Caco-2 (cell line): ENCODE measurements at regions of chr4 and their contacts with region 1.

Region 1: GRCh38 chr4:17786567-17786966 is 5.1 kb upstream of the FAM184B start:
- DNase-seq: no peak
- H3K4me3 ChIP-seq: no peak overlapping the region
- H3K4me3 Mint-ChIP-seq: no peak overlapping the region
- H3K27ac Mint-ChIP-seq: no peak overlapping the region
- H3K4me1 ChIP-seq: no peaks in the 10 kb centered on the region
- H3K4me1 Mint-ChIP-seq: no peaks in the 10 kb centered on the region
- H3K27me3 ChIP-seq: no peaks in the 10 kb centered on the region
- H3K27me3 Mint-ChIP-seq: no peaks in the 10 kb centered on the region
- CTCF ChIP-seq: no peak

Region 2: GRCh38 chr4:17562160-17562559 is 224.4 kb before region 1 on chr4:
- CTCF ChIA-PET with region 1: no interaction called
- POLR2A ChIA-PET with region 1: no interaction called
- intact Hi-C with region 1: no loop called
- DNase-seq: peak; percentile 12 to 46
- H3K4me3 ChIP-seq: no peak overlapping the region
- H3K4me3 Mint-ChIP-seq: no peak overlapping the region
- H3K27ac Mint-ChIP-seq: no peak overlapping the region
- H3K4me1 ChIP-seq: peaks cover 22% of the 10 kb centered on the region
- H3K4me1 Mint-ChIP-seq: peaks cover 6% of the 10 kb centered on the region
- H3K27me3 ChIP-seq: no peaks in the 10 kb centered on the region
- H3K27me3 Mint-ChIP-seq: no peaks in the 10 kb centered on the region
- CTCF ChIP-seq: no peak

Region 3: DNA sequence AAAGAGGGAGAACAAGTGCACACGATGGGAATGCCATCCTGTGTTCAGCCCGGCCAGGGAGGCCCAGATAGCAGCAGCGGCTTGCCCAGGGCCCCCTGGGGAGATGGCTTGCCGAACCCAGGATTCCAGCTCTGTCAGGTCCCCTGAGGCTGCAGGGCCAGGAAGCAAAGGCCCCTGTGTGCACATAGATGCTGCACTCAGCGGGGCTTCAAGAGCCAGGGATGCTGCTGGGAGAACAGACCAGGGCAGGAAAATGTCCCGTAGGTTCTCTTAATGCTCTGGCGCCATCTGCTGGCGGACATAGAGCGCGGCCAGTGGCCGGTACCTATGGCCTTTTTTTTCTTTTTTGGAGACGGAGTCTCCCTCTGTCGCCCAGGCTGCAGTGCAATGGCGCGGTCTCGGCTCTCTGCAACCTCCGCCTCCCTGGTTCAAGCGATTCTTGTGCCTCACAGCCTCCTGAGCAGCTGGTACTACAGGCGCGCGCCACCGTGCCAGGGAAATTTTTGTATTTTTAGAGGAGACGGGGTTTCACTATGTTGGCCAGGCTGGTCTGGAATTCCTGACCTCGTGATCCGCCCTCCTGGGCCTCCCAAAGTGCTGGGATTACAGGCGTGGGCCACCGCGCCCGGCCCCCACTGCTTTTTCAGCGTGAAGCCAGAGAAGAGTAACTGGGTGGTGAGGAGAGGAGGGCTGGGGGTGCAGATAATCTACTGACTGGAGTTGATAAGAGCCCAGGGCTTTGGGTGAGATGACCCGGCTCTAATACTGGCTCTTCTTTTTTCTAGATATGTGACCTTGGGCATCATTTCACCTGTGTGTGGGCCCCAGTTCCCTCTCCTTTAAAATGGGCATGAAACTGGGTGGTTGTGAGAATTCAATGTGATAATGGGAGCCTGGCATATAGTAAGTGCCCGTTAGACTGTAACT is 149.6 kb before region 1 on chr4:
- CTCF ChIA-PET with region 1: no interaction called
- POLR2A ChIA-PET with region 1: no interaction called
- intact Hi-C with region 1: loop called (anchors 5 kb)
- DNase-seq: peak; percentile 73 to 78
- H3K4me3 ChIP-seq: no peak overlapping the region
- H3K4me3 Mint-ChIP-seq: no peak overlapping the region
- H3K27ac Mint-ChIP-seq: no peak overlapping the region
- H3K4me1 ChIP-seq: no peaks in the 10 kb centered on the region
- H3K4me1 Mint-ChIP-seq: no peaks in the 10 kb centered on the region
- H3K27me3 ChIP-seq: no peaks in the 10 kb centered on the region
- H3K27me3 Mint-ChIP-seq: no peaks in the 10 kb centered on the region
- CTCF ChIP-seq: peak; percentile 83 to 90